K562 (cell line): ENCODE measurements at regions of chr11 and their contacts with region 1.

Region 1: DNA sequence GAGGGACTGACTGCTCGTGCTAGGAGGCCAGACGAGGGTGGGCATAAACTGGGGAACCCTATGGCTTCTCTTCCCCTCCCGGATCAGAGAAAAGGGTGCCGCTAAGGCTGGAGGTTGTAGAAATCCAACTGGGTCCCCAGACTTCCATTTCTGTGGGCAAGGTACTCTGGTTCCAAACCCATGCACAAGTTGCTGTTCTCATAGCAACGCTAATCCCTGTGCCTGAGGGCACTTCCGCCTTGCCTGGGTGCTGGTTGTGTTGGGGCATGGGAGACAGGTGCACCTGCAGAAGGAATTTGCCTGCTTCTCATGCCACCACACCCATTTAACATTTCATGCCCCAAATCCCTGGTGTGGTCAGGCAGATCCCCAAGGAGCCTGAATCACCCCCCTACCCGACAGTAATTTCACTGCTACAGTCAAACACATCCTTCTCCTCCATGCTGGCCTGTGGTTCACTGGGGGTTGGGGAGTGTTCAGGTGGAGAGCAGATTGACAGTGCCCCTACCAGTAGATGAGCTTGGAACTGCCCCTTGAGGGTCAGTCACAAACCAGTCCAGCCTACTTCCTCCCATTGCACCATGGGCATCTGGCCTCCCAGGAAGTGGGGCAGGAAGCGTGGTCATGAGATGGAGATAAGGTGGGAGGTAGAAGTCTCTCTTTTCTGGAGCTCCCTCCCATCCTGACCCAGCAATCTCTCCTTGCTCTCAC is 1.2 kb downstream of the C2CD2L start:
- DNase-seq: peak; percentile 56 to 89 (median 74)
- ATAC-seq: peak; percentile 71
- H3K4me3 ChIP-seq: peak overlapping the region; percentile 94
- H3K27ac ChIP-seq: peak overlapping the region; percentile 83
- H3K4me1 ChIP-seq: peaks cover 35 to 37% of the 10 kb centered on the region in 2 experiments
- H3K27me3 ChIP-seq: no peaks in the 10 kb centered on the region
- CTCF ChIP-seq: no peak
- EP300 ChIP-seq: peak; percentile 61; the same call in 1 of the 2 replicates
- POLR2A ChIP-seq: peak; percentile 72
- RAD21 ChIP-seq: no peak

Region 2: GRCh38 chr11:118883368-118884071 is 224.8 kb before region 1 on chr11 and contains the start of gene CXCR5:
- CTCF ChIA-PET with region 1: no interaction called
- POLR2A ChIA-PET with region 1: no interaction called
- in situ Hi-C with region 1: no loop called
- intact Hi-C with region 1: no loop called
- DNase-seq: no peak
- ATAC-seq: no peak
- H3K4me3 ChIP-seq: no peak within 1 kb of the TSS
- H3K27ac ChIP-seq: no peak within 1 kb of the TSS
- H3K4me1 ChIP-seq: peaks cover 22 to 33% of the 10 kb centered on the region in 2 experiments
- H3K27me3 ChIP-seq: no peaks in the 10 kb centered on the region
- CTCF ChIP-seq: no peak
- EP300 ChIP-seq: no peak
- POLR2A ChIP-seq: no peak
- RAD21 ChIP-seq: no peak
- polyA plus RNA-seq, gene CXCR5: 0.03 to 0.06 TPM

Region 3: DNA sequence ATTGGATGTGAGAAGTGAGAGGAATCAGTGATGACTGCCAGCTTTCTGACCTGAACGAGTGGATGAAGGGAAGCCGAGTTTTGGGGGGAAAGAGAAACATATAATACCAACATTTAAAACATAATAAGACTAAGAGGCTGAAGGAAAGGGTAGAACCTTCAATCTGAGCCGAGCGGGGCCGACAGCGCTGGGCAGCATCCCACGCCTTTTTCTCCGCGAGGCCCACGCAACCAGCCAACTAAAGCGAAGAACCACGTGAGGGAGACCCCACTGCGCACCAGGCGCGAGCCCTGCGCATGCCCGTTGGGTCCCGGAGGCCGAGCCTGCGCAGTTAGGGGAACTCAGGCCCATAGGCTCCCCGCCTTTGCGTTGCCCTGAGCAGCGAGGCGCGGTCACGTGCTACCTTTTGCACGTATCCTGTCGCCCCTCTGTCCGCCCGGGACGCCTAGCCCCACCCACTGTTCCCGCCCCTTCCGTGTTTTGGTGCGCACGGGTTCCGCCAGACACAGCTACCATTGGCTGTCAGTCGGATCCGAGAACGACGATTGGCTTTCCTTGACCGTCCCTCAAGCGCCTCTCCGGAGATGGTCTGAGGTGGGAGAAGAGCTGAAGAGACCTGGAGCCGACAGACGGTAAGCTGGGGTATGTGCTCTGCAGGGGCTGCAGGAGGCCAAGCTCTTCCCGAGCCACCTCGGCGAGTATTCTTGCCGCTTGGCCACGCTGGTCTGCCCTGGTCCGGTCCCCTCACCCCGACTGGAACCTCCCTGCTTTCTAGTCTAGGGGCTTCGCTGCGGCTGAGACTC is 12.9 kb after region 1 on chr11 and contains the start of gene HINFP:
- CTCF ChIA-PET with region 1: no interaction called
- POLR2A ChIA-PET with region 1: interaction called, 10 read pairs
- in situ Hi-C with region 1: no loop called
- intact Hi-C with region 1: loop called (anchors 2 kb)
- DNase-seq: peak; percentile 97 to 99 (median 98)
- ATAC-seq: peak; percentile 97
- H3K4me3 ChIP-seq: peak within 1 kb of the TSS; percentile 86
- H3K27ac ChIP-seq: peak within 1 kb of the TSS; percentile 68
- H3K4me1 ChIP-seq: peaks cover 13 to 17% of the 10 kb centered on the region in 2 experiments
- H3K27me3 ChIP-seq: no peaks in the 10 kb centered on the region
- CTCF ChIP-seq: no peak
- EP300 ChIP-seq: no peak
- POLR2A ChIP-seq: peak; percentile 84
- RAD21 ChIP-seq: no peak
- polyA plus RNA-seq, gene HINFP: 22.5 to 34.1 TPM

Region 4: DNA sequence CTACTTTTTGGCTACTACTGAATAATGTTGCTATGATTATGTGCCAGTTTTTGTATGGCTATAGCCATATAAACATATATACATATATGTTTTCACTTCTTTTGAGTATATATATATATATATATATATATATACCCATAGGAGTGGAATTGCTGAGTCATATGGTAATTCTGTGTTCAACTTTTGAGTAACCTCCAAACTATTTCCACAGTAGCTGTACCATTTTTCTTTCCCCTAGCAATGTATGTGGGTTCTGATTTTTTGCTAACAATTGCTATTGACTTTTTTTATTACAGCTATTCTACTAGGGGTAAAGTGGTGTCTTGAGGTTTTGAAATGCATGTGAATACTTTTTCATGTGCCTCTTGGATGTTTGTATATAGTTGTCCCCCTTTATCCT is 128.2 kb after region 1 on chr11:
- CTCF ChIA-PET with region 1: no interaction called
- POLR2A ChIA-PET with region 1: no interaction called
- in situ Hi-C with region 1: no loop called
- intact Hi-C with region 1: no loop called
- DNase-seq: no peak
- ATAC-seq: no peak
- H3K4me3 ChIP-seq: no peak overlapping the region
- H3K27ac ChIP-seq: no peak overlapping the region
- H3K4me1 ChIP-seq: no peaks in the 10 kb centered on the region
- H3K27me3 ChIP-seq: no peaks in the 10 kb centered on the region
- CTCF ChIP-seq: no peak
- EP300 ChIP-seq: no peak
- POLR2A ChIP-seq: no peak
- RAD21 ChIP-seq: no peak